ENCODE measurements at regions of chr14 and their contacts with region 1.

Region 1: GRCh38 chr14:100261621-100262020 is 22.7 kb downstream of the YY1 start:
- DNase-seq: no peak
- H3K4me3 Mint-ChIP-seq: peak overlapping the region; percentile 8
- H3K27ac Mint-ChIP-seq: peak overlapping the region; percentile 83
- H3K4me1 Mint-ChIP-seq: peaks cover 76% of the 10 kb centered on the region
- H3K27me3 Mint-ChIP-seq: no peaks in the 10 kb centered on the region

Region 2: DNA sequence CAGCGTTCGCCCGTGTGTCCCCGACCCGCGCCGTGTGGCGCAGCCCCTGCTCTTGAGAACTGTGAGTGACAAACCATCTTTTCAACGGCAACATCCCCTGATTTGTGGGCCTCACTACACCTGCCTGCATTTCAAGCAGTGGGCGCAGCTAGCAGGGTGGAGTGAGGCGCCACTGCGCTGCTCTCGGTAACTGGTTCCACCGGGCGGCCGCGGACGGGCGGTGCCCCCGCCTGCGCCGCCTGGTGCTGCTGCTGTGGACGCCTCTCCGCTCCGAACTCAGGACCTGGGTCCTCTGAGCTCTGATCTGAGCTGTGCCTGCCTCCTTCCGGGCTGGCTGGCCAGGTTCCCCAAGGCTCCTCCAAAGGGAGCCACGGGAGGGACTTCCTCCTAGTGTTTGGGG is 96.2 kb before region 1 on chr14:
- intact Hi-C with region 1: no loop called
- DNase-seq: no peak
- H3K4me3 Mint-ChIP-seq: no peak overlapping the region
- H3K27ac Mint-ChIP-seq: no peak overlapping the region
- H3K4me1 Mint-ChIP-seq: peaks cover 6% of the 10 kb centered on the region
- H3K27me3 Mint-ChIP-seq: peaks cover 16% of the 10 kb centered on the region

Region 3: GRCh38 chr14:100246826-100247428 is 14.7 kb before region 1 on chr14:
- intact Hi-C with region 1: loop called (anchors 2 kb)
- DNase-seq: no peak
- H3K4me3 Mint-ChIP-seq: no peak overlapping the region
- H3K27ac Mint-ChIP-seq: peak overlapping the region; percentile 27
- H3K4me1 Mint-ChIP-seq: peaks cover 49% of the 10 kb centered on the region
- H3K27me3 Mint-ChIP-seq: no peaks in the 10 kb centered on the region